OCI-LY7 (cell line): ENCODE measurements at regions of chr16 and their contacts with region 1.

Region 1: GRCh38 chr16:78770353-78771091 is 671.1 kb downstream of the WWOX start:
- DNase-seq: peak; percentile 61
- H3K4me3 ChIP-seq: no peak overlapping the region
- H3K27ac ChIP-seq: no peak overlapping the region
- H3K4me1 ChIP-seq: no peaks in the 10 kb centered on the region
- CTCF ChIP-seq: peak; percentile 79

Region 2: GRCh38 chr16:78503602-78504001 is 266.9 kb before region 1 on chr16:
- CTCF ChIA-PET with region 1: no interaction called
- POLR2A ChIA-PET with region 1: no interaction called
- intact Hi-C with region 1: loop called (anchors 2 kb)
- DNase-seq: peak; percentile 39
- H3K4me3 ChIP-seq: no peak overlapping the region
- H3K27ac ChIP-seq: no peak overlapping the region
- H3K4me1 ChIP-seq: no peaks in the 10 kb centered on the region
- CTCF ChIP-seq: peak; percentile 87

Region 3: DNA sequence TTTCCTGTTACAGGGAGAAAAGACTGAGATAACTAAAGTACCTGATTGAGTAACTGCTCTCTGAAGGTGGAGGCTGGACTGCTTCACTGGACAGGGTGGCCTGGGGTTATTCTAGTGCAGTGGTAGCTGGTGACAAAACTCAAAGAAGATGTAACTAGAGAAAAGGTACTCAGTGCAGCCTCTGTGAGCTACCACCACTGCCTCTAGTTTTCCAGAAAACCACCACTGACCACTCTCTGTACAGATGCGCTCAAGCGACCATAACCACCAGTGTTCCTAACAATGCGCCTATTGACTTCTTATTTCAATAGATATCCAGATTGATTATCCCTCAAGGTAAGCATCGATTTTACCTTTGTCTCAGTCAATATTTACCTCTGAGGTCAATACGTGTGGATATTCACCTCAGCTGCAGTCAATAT is 178.8 kb before region 1 on chr16:
- CTCF ChIA-PET with region 1: no interaction called
- POLR2A ChIA-PET with region 1: no interaction called
- intact Hi-C with region 1: loop called (anchors 10 kb)
- DNase-seq: no peak
- H3K4me3 ChIP-seq: no peak overlapping the region
- H3K27ac ChIP-seq: no peak overlapping the region
- H3K4me1 ChIP-seq: no peaks in the 10 kb centered on the region
- CTCF ChIP-seq: no peak

Region 4: GRCh38 chr16:78705694-78706093 is 64.8 kb before region 1 on chr16:
- CTCF ChIA-PET with region 1: no interaction called
- POLR2A ChIA-PET with region 1: interaction called, 6 read pairs
- intact Hi-C with region 1: loop called (anchors 2 kb)
- DNase-seq: peak; percentile 22
- H3K4me3 ChIP-seq: no peak overlapping the region
- H3K27ac ChIP-seq: no peak overlapping the region
- H3K4me1 ChIP-seq: no peaks in the 10 kb centered on the region
- CTCF ChIP-seq: peak; percentile 74

Region 5: DNA sequence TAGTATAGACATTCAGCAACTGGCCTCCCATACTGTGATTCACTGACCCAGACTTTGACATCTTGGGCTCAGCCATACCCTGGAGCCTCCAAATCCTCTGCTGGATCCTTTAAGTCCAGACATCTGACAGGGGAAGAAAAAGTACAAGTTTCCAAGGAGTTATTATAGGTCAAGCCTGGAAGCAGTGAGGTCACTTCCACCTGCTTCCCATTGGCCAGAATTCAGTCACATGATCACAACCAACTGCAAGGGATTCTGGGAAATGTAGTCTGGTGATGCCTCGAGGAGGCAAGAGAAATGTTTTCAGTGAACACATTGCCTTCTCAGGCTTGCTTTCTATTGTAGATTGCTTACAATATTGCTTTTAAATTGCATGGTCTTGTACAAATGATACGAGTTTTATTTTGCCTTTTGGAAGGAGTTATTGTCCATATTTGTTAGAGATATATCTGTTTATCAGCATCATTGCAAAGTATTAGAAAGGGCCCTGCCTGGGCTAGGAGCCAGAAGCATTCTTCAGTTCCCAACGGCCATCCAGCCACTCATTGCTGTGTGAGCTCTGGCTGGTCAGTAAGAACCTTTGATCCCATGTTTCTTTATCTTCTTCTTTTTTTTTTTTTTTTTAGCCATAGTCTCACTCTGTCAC is 25.8 kb after region 1 on chr16:
- CTCF ChIA-PET with region 1: no interaction called
- POLR2A ChIA-PET with region 1: no interaction called
- intact Hi-C with region 1: no loop called
- DNase-seq: peak; percentile 75
- H3K4me3 ChIP-seq: peak overlapping the region; percentile 30
- H3K27ac ChIP-seq: no peak overlapping the region
- H3K4me1 ChIP-seq: no peaks in the 10 kb centered on the region
- CTCF ChIP-seq: no peak